ENCODE measurements at regions of chr2 and their contacts with region 1.

Region 1: DNA sequence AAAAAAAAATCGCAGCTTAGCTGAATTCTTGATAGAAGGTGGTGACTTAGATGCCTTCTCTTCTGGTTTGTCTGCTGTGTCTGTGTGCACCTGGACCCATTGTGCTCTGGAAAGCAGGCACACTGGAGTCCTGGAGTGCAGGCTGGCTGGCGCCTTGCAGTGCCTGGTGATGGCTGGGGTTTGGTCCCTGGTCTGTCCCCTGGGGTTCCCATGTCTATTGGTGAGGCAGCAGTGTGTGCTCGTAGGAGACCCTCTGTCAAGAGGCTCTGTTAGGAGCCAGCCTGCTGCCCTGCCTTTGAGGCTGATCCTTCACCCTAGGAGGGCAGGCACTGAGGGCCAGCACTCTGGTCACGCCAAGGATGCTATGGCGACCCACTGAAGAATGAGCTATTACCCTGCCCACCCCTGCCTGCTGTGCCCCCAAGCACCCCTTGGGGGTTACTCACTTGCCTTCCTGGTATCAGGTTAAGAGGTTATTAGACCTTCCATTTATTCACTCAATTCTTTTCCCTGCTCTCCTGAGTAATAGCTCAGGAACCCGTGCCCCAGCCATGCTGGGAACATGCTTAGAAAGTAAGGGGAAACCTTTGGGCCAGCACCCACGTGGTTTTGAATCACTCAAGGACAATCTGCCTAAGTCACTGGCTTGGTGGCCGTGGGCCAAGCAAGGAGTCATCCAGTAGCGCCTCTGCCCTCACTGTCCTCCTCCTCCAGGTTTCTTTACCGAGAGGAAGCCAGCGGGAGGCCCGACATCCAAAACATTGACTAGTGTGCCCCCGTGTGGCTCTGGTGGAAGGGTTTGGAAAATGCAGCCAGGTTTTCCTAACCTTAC is 284.5 kb downstream of the PRKCE start:
- DNase-seq: peak; percentile 94 to 99
- H3K4me3 ChIP-seq: no peak overlapping the region
- H3K27ac ChIP-seq: peak overlapping the region; percentile 55
- H3K4me1 ChIP-seq: peaks cover 44% of the 10 kb centered on the region
- H3K27me3 ChIP-seq: no peaks in the 10 kb centered on the region
- CTCF ChIP-seq: peak; percentile 93

Region 2: DNA sequence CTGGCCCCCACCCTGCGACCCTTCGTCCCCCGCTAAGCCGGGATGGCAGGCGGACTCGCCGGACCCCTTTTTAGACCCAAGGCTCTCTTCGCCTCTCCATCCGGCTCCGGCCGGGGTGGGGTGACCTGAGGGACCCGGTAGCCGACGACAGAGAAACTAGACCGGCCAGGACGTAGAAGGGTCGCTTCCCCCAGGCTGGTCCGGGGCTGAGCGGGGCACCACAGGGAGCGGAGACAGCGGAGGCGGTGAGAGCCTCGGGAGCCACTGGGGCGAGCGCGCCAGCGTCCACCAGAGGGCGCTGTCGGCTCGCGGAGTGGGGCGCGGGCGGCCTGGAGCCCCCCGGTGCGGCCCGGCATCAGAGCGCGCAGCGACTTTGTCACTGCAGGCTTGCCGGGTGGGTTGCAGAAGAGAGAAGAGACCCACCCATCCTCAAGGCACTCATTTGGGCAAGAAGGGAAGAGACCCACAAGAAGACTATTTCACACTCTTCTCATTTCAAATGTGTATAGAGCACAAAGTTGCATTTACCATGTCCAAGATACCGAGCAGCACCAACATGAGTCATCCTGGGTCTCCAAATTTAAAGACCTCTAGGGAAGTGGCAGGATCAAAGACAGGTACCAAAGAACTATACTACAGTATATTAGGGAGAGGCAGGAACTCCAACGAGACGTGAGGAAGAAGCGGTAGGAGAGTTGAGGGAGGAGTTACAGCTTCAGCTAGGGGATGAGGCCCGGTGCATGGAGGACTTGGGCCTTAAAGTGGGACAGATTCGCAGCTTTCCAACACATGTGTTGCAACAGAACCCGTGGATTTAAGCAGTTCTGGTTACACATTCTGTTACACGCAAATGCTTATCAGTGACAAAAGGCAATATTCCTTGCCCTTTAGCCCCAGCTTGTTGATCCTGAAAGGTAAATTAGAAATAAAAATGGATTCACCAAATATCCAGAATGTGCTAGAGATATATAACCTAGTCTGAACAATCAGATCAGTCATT is 292.2 kb before region 1 on chr2:
- CTCF ChIA-PET with region 1: no interaction called
- POLR2A ChIA-PET with region 1: no interaction called
- intact Hi-C with region 1: loop called (anchors 1 kb)
- DNase-seq: peak in 1 of 2 experiments; percentile 72
- H3K4me3 ChIP-seq: peak overlapping the region; percentile 61
- H3K27ac ChIP-seq: no peak overlapping the region
- H3K4me1 ChIP-seq: peaks cover 9% of the 10 kb centered on the region; the same call in 1 of the 2 replicates
- H3K27me3 ChIP-seq: no peaks in the 10 kb centered on the region
- CTCF ChIP-seq: peak; percentile 99

Region 3: GRCh38 chr2:45821564-45822271 is 114.3 kb before region 1 on chr2:
- CTCF ChIA-PET with region 1: interaction called, 5 read pairs
- POLR2A ChIA-PET with region 1: no interaction called
- intact Hi-C with region 1: loop called (anchors 1 kb)
- DNase-seq: peak; percentile 71 to 90
- H3K4me3 ChIP-seq: peak overlapping the region; percentile 36; the same call in 1 of the 2 replicates
- H3K27ac ChIP-seq: peak overlapping the region; percentile 52
- H3K4me1 ChIP-seq: peaks cover 36% of the 10 kb centered on the region
- H3K27me3 ChIP-seq: no peaks in the 10 kb centered on the region
- CTCF ChIP-seq: no peak

Region 4: GRCh38 chr2:45922571-45922988 is 13.4 kb before region 1 on chr2:
- CTCF ChIA-PET with region 1: interaction called, 14 read pairs
- POLR2A ChIA-PET with region 1: interaction called, 4 read pairs
- intact Hi-C with region 1: no loop called
- DNase-seq: peak; percentile 33 to 61
- H3K4me3 ChIP-seq: no peak overlapping the region
- H3K27ac ChIP-seq: no peak overlapping the region
- H3K4me1 ChIP-seq: peaks cover 23% of the 10 kb centered on the region
- H3K27me3 ChIP-seq: no peaks in the 10 kb centered on the region
- CTCF ChIP-seq: no peak

Region 5: DNA sequence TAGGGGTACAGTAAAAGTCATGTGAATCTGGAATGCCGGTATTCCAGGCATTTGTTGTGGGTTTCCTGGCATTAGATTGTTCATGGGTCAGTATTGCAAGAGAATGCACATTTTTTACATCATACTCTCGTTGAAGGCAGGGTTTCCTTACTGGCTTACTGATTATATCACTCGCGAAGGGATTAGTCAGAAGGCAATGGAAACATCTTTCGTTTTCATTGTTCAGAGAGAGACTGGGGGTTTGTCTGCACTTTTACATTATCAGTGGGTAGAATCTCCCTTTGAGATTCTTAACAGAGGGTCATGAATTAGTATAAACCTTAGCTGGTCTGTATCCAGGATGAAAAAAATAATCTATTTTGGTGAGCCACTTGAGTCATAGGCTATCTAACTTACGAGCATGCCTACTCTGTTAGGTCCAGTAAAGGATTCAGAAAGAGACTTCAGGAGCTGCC is 131.9 kb after region 1 on chr2:
- CTCF ChIA-PET with region 1: no interaction called
- POLR2A ChIA-PET with region 1: no interaction called
- intact Hi-C with region 1: loop called (anchors 1 kb)
- DNase-seq: peak; percentile 60 to 98
- H3K4me3 ChIP-seq: peak overlapping the region; percentile 27
- H3K27ac ChIP-seq: peak overlapping the region; percentile 89
- H3K4me1 ChIP-seq: peaks cover 80% of the 10 kb centered on the region
- H3K27me3 ChIP-seq: no peaks in the 10 kb centered on the region
- CTCF ChIP-seq: no peak

Measured in PC-9 (cell line).